Heart right ventricle (tissue), 16 donors: ENCODE measurements at regions of chr2 and their contacts with region 1.

Region 1: GRCh38 chr2:46364797-46365457 is 67.7 kb downstream of the EPAS1 start:
- DNase-seq: peak in 1 of 2 donors; percentile 65
- ATAC-seq: peak in 7 of 8 donors; percentile 13 to 61 (median 53)
- H3K4me3 ChIP-seq: no peak overlapping the region
- H3K27ac ChIP-seq: peak overlapping the region in 7 of 10 donors; percentile 8 to 71 (median 37)
- H3K4me1 ChIP-seq: peaks cover 0 to 93% (median 41%) of the 10 kb centered on the region in 9 donors
- H3K27me3 ChIP-seq: no peaks in the 10 kb centered on the region
- CTCF ChIP-seq: peak; percentile 74 to 88 (median 83)

Region 2: GRCh38 chr2:46002507-46002883 is 362.4 kb before region 1 on chr2:
- intact Hi-C with region 1: loop called in 5 of 10 experiments (anchors 5 to 10 kb)
- DNase-seq: no peak
- ATAC-seq: peak; percentile 30 to 57 (median 44)
- H3K4me3 ChIP-seq: no peak overlapping the region
- H3K27ac ChIP-seq: peak overlapping the region in 8 of 10 donors; percentile 6 to 60 (median 37)
- H3K4me1 ChIP-seq: peaks cover 0 to 31% (median 18%) of the 10 kb centered on the region in 9 donors
- H3K27me3 ChIP-seq: no peaks in the 10 kb centered on the region
- CTCF ChIP-seq: no peak

Region 3: DNA sequence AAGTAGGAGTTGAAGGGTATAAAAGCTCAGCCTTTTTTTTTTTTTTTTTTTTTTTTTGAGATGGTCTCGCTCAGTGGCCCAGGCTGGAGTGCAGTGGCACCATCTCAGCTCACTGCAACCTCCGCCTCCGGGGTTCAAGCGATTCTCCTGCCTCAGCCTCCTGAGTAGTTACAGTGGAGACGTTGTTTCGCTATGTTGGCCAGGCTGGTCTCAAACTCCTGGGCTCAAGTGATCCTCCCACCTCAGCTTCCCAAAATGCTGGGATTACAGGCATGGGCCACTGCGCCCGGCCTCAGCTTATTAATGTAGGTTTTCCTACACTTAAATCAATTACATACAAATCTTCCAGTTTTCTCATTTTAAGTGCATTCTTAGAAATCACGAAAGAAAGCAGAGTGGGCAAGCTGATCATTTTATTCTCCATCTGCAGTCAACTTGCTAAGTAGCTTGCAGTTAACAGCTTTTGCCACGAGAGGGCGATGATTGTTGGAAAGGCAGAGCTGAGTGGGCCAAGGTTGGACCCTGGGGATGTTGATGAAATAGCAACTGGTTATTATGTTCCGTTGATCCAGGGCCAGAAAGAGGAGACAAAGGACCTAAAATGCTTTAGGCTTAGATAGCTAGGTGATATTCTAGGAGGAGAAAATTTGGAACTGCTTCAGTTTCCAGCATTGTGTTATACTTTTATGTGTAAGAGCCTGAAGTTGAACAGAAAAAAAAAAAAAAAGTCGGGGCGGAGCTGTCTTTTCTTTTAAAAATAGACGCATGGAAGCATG is 302.1 kb before region 1 on chr2:
- intact Hi-C with region 1: loop called in 8 of 10 experiments (anchors 5 to 10 kb)
- DNase-seq: peak; percentile 53 to 94
- ATAC-seq: peak; percentile 74 to 88 (median 78)
- H3K4me3 ChIP-seq: peak overlapping the region in 1 of 10 donors; percentile 4
- H3K27ac ChIP-seq: peak overlapping the region in 9 of 10 donors; percentile 56 to 90 (median 70)
- H3K4me1 ChIP-seq: peaks cover 3 to 76% (median 33%) of the 10 kb centered on the region in 9 donors
- H3K27me3 ChIP-seq: no peaks in the 10 kb centered on the region
- CTCF ChIP-seq: peak; percentile 84 to 95 (median 90)

Region 4: GRCh38 chr2:46230115-46230571 is 134.8 kb before region 1 on chr2:
- intact Hi-C with region 1: loop called in 4 of 10 experiments (anchors 1 to 10 kb)
- DNase-seq: peak; percentile 23 to 51
- ATAC-seq: peak; percentile 74 to 91 (median 85)
- H3K4me3 ChIP-seq: no peak overlapping the region
- H3K27ac ChIP-seq: peak overlapping the region in 8 of 10 donors; percentile 4 to 61 (median 42)
- H3K4me1 ChIP-seq: peaks cover 3 to 35% (median 21%) of the 10 kb centered on the region in 9 donors
- H3K27me3 ChIP-seq: no peaks in the 10 kb centered on the region
- CTCF ChIP-seq: peak in 8 of 9 donors; percentile 10 to 57 (median 46)

Region 5: DNA sequence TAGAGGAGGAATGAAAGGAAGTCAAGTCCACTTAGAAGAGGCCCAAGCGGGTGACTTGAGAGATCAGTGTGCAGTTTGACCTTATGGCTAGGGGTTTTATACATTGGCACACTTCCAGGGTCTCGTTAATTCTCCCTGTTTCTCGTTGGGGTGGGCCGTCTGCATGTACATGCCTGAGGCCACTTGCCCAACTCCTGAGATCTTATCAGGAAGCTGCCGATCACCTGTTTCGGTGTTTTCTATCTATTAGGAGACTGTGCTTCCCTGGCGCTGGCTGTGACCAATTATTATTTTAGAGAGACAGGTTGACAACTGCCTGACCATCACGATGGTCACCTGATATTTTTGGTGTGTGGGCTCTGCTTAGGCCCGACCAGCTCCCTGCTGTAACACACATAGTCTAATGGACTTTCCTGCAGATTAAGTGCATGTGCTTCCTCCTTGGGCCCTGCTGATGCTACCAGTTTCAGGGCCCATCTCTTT is 1387.0 kb after region 1 on chr2:
- intact Hi-C with region 1: no loop called
- DNase-seq: no peak
- ATAC-seq: no peak
- H3K4me3 ChIP-seq: no peak overlapping the region
- H3K27ac ChIP-seq: peak overlapping the region in 1 of 10 donors; percentile 58
- H3K4me1 ChIP-seq: peaks cover 0 to 18% (median 0%) of the 10 kb centered on the region in 9 donors
- H3K27me3 ChIP-seq: peaks cover 0 to 13% (median 0%) of the 10 kb centered on the region in 7 donors
- CTCF ChIP-seq: no peak